ACHN (cell line): ENCODE measurements at regions of chr10 and their contacts with region 1.

Region 1: DNA sequence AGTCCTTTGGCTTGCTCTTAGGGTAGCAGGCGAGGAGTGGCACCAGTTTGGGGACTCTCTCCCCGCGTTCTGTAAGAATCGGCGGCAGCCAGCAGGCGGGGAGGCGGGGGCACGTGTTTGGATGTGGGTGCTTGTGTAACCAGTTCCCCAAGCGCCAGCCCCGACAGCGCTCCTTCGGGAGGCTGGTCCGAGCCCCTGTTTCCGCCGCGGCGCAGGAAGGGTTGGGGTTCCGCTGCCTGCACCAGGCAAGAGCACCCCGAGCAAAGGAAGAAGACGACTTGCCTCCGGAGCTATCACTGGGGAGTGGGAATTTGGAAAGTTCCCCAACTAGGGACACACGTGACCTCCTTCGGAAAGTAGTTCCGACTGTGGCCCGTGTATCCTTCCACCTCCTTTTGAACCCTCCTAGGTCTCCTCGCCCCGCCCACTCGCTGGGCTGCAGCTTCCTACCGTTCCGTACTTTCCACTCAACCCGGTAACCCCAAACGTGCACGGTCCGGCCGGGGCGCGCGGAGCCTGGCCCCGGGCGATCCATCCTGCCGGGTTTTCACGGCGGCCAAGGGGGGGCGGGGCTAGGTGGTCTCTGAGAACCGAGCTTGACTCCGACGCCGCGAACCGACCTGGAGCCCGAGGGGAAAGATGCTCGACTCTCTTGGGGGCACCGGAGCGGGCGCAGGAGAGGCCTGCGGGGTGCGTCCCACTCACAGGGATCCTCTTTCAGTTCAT is 1.2 kb downstream of the KLLN start:
- DNase-seq: peak; percentile 99

Region 2: DNA sequence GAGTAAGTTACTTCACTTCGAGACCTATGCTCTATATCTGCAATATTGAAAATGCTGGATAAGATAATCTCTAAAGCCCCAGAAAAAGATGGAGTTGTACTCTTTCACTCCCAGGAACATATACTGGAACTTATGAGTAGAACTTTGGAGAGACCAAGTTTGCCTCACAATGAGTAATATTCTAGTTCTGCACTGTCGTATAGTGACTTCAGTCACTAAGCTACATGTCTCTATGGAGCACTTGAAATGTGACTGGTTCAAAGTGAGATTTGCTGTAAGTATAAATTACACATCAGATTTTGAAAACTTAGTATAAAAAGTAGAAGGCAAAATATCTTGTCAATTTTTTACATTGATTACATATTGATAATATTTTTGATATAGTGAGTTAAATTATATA is 117.7 kb after region 1 on chr10:
- in situ Hi-C with region 1: no loop called
- DNase-seq: no peak

Region 3: GRCh38 chr10:88152720-88153119 is 290.6 kb after region 1 on chr10:
- in situ Hi-C with region 1: no loop called
- DNase-seq: peak; percentile 81

Region 4: GRCh38 chr10:88553116-88553752 is 691.1 kb after region 1 on chr10:
- in situ Hi-C with region 1: loop called (anchors 25 kb)
- DNase-seq: peak; percentile 69